ENCODE measurements at regions of chr11 and their contacts with region 1.

Region 1: GRCh38 chr11:82927254-82927880 is 25.8 kb downstream of the DDIAS start:
- DNase-seq: peak in 1 of 2 donors; percentile 20
- ATAC-seq: peak in 2 of 8 donors; percentile 51 to 63
- H3K4me3 ChIP-seq: no peak overlapping the region
- H3K27ac ChIP-seq: no peak overlapping the region
- H3K4me1 ChIP-seq: peaks cover 0 to 12% (median 0%) of the 10 kb centered on the region in 9 donors
- H3K27me3 ChIP-seq: no peaks in the 10 kb centered on the region
- CTCF ChIP-seq: peak in 8 of 9 donors; percentile 68 to 89 (median 80)

Region 2: GRCh38 chr11:82867495-82868082 is 59.8 kb before region 1 on chr11:
- intact Hi-C with region 1: loop called in 3 of 10 experiments (anchors 2 to 10 kb)
- DNase-seq: peak in 1 of 2 donors; percentile 89
- ATAC-seq: peak in 7 of 8 donors; percentile 22 to 74 (median 56)
- H3K4me3 ChIP-seq: peak overlapping the region in 6 of 10 donors; percentile 19 to 38 (median 32)
- H3K27ac ChIP-seq: peak overlapping the region in 2 of 10 donors; percentile 16 to 48
- H3K4me1 ChIP-seq: peaks cover 0 to 69% (median 29%) of the 10 kb centered on the region in 9 donors
- H3K27me3 ChIP-seq: no peaks in the 10 kb centered on the region
- CTCF ChIP-seq: peak; percentile 55 to 87 (median 74)

Region 3: DNA sequence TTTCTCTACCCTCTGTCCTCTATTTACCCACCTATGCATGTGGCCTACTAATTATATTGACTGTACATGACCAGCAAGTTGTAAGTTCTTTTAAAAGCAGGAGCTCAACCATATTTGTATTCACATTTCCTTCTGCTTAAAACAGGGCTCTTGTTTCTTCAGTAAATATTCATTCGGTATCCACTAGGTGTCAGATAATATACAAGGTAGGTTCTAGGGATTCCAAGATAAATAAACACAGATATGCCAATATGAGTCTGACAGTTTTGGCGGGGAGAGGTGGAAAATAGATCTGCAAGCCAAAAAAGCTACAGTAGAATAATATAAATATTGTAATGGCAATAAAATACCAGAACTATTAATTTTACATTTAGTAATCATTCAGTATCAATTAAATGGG is 159.7 kb after region 1 on chr11:
- intact Hi-C with region 1: loop called in 1 of 10 experiments (anchors 10 kb)
- DNase-seq: no peak
- ATAC-seq: peak in 2 of 8 donors; percentile 32 to 55
- H3K4me3 ChIP-seq: no peak overlapping the region
- H3K27ac ChIP-seq: no peak overlapping the region
- H3K4me1 ChIP-seq: peaks cover 0 to 13% (median 0%) of the 10 kb centered on the region in 9 donors
- H3K27me3 ChIP-seq: no peaks in the 10 kb centered on the region
- CTCF ChIP-seq: peak in 5 of 9 donors; percentile 6 to 25 (median 19)

Measured in heart right ventricle (tissue), 16 donors.